Activated T-helper 2 cell treated with anti-CD3 and anti-CD28 coated beads, Interferon-gamma antibody, Interleukin-2, Interleukin-4, amounts not matched to agents 10 μg/mL and 5 μg/mL and 100 μg/mL, durations not matched to agents 14 hours and 24 hours and 36 hours (primary cell): ENCODE measurements at regions of chr1 and their contacts with region 1.

Region 1: DNA sequence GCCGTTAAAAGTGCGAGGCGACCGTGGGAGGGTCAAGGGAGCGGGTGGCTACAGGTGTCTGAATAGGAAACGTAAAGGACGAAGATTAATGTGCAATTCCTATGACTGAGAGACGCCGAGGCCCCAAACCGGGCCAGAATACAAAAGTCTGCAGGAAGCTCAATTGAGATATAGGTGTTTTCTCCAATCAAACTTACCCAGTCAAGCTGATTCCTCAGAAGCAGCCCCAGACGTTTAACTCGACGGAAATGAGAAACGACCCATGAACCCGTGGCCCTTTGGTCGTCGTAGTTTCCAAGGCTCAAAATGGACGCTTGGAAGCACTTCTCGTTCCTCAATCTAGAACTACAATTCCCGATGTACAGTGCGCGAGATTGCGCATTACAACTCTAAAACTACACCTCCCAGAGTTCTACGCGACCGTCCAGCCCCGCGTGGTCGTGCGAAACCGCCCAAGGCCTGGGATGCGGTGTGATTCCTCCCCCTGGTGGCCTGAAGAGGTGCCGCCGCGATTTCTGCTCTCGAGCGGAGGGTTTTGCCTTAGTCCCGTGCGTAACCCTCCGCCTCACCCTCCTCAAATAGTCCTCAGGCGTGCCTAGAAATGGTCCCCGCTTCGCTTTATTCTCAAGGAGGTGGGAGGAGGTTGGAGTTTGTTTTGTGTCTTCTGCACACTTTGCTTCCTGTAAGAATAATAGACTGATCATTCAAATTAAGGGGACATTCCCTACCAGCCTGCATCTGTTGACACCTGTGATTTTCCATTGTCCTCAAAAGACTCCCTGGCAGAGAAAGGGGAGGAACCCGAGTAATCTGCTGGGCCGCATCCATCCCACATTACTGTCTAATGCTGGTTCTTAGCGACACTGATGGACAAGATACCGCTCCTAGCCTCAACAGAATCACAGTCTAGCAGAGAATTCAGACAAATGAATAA is at the start of gene PAFAH2:
- DNase-seq: peak; percentile 96
- H3K4me3 Mint-ChIP-seq: peak within 1 kb of the TSS; percentile 98
- H3K27ac Mint-ChIP-seq: peak within 1 kb of the TSS; percentile 99
- H3K4me1 Mint-ChIP-seq: peaks cover 23% of the 10 kb centered on the region
- H3K27me3 Mint-ChIP-seq: no peaks in the 10 kb centered on the region
- total RNA-seq, gene PAFAH2: 7.3 and 7.7 TPM in 2 replicates

Region 2: GRCh38 chr1:25616095-25616986 is 381.8 kb before region 1 on chr1 and contains the start of gene MAN1C1:
- intact Hi-C with region 1: no loop called
- DNase-seq: peak; percentile 80
- H3K4me3 Mint-ChIP-seq: peak within 1 kb of the TSS; percentile 50
- H3K27ac Mint-ChIP-seq: no peak within 1 kb of the TSS
- H3K4me1 Mint-ChIP-seq: peaks cover 47% of the 10 kb centered on the region
- H3K27me3 Mint-ChIP-seq: peaks cover 72% of the 10 kb centered on the region
- total RNA-seq, gene MAN1C1: 4.1 and 5.0 TPM in 2 replicates

Region 3: DNA sequence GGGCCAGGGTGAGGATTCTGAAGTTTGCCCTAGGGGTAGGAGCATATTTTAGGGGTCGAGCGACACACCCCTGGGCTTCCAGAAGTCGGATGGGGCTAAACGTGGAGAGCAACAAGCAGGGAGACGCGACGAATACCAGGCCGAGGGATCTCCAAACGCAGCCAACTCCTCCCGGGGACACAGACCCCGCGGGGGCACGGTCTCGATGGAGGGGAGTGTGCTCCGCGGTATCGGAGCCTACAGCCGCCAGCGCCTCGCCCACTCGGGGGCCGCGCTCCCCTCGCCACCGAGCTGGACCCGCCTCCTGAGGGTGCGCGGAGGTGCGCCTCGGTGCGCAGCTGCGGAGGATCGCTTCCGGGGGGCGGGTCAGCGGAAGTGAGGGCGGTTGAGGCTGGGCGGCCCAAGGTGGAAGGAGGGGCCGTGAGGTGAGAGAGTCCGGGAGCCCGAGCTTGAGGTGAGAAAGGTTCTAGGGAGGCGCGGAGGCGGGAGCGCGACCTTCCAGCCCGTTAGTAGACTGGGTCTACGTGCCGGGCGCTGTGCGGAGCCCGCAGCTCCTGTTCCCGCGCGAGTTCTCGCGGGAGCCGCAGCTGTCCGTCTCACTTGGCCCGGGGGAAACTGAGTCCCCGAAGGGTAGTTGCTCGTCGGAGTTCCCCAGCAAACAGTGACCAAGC is 178.4 kb before region 1 on chr1 and contains the start of gene MTFR1L:
- intact Hi-C with region 1: loop called (anchors 1 kb)
- DNase-seq: peak; percentile 92
- H3K4me3 Mint-ChIP-seq: peak within 1 kb of the TSS; percentile 97
- H3K27ac Mint-ChIP-seq: peak within 1 kb of the TSS; percentile 90
- H3K4me1 Mint-ChIP-seq: peaks cover 26% of the 10 kb centered on the region
- H3K27me3 Mint-ChIP-seq: no peaks in the 10 kb centered on the region
- total RNA-seq, gene MTFR1L: 29.6 and 30.0 TPM in 2 replicates

Region 4: DNA sequence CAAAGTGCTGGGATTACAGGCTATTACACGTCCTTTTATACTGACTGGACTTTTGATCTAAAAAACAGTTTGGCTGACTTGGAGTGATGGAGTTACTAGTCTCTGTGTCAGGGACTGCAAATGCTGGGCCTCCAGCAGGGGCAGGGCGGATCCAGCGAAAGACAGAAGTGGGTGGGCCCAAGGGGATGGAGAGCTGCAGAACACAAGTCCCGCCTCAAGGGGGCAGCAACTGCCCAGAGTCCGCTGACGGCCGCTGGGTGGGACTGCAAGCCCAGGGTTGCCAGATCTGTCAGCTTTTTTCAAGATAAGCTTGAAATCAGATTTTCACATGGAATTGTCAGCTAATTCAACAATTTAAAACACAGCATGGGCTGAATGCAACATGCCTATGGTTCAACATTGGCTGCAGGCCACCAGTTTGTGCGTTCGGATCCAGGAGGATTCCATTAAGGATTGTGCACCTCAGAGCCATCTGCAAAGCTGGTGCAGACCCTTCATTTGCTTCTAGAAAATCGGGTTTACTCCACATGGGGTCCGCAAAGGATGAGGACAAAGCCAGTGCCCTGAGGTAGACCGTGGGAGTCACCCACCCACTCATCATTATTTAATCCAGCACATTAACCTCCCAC is 102.6 kb before region 1 on chr1:
- intact Hi-C with region 1: loop called (anchors 1 kb)
- DNase-seq: peak; percentile 86
- H3K4me3 Mint-ChIP-seq: no peak overlapping the region
- H3K27ac Mint-ChIP-seq: peak overlapping the region; percentile 58
- H3K4me1 Mint-ChIP-seq: peaks cover 24% of the 10 kb centered on the region
- H3K27me3 Mint-ChIP-seq: no peaks in the 10 kb centered on the region

Region 5: GRCh38 chr1:25905680-25906643 is 92.1 kb before region 1 on chr1 and contains the start of gene STMN1:
- intact Hi-C with region 1: loop called (anchors 1 kb)
- DNase-seq: peak; percentile 83
- H3K4me3 Mint-ChIP-seq: peak within 1 kb of the TSS; percentile 93
- H3K27ac Mint-ChIP-seq: peak within 1 kb of the TSS; percentile 92
- H3K4me1 Mint-ChIP-seq: peaks cover 30% of the 10 kb centered on the region
- H3K27me3 Mint-ChIP-seq: peaks cover 15% of the 10 kb centered on the region
- total RNA-seq, gene STMN1: 334 and 341 TPM in 2 replicates

Region 6: GRCh38 chr1:26035959-26036755 is 38.1 kb after region 1 on chr1:
- intact Hi-C with region 1: no loop called
- DNase-seq: peak; percentile 74
- H3K4me3 Mint-ChIP-seq: peak overlapping the region; percentile 94
- H3K27ac Mint-ChIP-seq: no peak overlapping the region
- H3K4me1 Mint-ChIP-seq: peaks cover 10% of the 10 kb centered on the region
- H3K27me3 Mint-ChIP-seq: peaks cover 25% of the 10 kb centered on the region

Region 7: DNA sequence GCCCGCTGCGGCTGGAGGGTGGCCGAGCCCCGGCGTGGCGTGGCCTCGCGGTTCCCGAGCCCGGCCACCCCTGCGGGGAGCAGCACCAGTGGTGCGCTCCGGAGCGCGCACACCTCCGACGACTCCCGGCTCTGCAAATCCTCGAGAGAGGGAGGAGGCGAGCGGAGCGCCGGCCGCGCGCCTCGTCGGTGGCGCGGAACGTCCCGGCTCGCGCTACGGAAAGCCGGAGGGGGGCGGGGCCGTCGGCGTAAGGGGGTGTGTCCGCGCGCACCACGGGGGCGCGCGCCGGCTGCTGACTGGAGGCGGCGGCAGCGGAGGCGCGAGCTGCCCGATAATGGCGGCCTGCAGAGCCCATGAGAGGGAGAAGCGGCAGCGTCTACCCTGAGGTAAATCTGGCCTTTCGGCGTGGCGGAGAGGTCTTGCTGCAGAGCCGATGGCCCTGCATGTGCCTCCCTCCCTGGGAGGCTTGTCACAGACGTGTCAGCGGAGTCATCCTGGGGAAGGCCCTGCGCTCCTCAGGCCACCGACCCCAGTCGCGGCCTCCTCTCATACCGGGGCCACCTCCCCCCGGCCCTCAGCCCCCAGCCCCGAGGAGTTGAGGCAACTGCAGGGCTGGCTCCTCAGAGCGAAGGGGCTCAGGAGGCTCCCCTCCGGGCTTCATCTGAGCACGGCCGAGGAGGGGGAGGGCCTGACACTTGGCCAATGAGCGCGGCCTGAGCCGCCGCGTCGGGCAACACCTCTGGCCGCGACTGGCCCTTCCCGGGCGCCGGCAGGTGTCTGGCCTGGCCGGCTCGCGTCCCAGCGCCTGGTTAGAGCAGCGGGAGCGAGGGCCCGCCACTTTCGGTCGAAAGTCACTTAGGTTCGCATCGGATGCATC is 113.7 kb after region 1 on chr1 and contains the start of gene PDIK1L:
- intact Hi-C with region 1: loop called (anchors 2 kb)
- DNase-seq: peak; percentile 90
- H3K4me3 Mint-ChIP-seq: peak within 1 kb of the TSS; percentile 96
- H3K27ac Mint-ChIP-seq: peak within 1 kb of the TSS; percentile 92
- H3K4me1 Mint-ChIP-seq: peaks cover 29% of the 10 kb centered on the region
- H3K27me3 Mint-ChIP-seq: no peaks in the 10 kb centered on the region
- total RNA-seq, gene PDIK1L: 15.2 and 17.2 TPM in 2 replicates

Region 8: DNA sequence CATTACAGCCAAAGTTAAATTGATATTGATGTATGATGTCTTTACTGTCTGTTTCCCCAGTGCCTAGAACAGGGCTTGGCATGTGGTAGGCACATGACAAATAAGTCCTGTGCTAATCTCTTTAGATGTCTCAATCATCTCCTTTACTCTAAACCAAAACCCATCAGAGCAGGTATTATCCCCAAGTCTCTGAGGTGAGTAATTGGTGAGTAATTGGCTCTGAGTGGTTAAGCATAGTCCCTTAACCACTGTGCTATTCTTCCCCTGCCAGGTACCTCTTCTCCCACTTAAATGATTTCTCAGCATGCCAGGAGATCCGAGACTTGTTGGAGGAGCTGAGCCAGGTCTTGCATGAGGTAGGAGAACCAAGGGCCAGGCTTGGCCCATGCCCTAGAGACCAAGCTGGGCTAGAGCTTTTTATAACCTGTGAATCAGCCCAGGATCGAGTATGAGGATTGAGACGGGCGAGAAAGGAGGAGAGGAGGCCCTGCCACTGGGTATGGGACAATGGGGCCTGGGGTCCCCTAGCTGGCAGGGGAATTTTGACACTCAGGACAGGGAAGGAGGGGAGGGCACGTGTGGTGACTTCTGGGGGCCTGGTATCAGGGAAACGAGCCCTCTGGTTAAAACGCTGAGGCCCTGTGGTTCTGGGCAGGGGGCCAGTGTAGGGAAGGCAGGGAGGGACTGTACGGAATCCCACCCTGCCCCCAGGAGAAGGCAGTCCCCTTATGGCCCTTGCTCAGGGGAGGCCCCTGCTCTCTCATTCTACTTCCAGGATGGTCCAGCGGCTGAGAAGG is 183.7 kb after region 1 on chr1:
- intact Hi-C with region 1: no loop called
- DNase-seq: no peak
- H3K4me3 Mint-ChIP-seq: no peak overlapping the region
- H3K27ac Mint-ChIP-seq: no peak overlapping the region
- H3K4me1 Mint-ChIP-seq: peaks cover 5% of the 10 kb centered on the region
- H3K27me3 Mint-ChIP-seq: no peaks in the 10 kb centered on the region